ENCODE measurements at regions of chr14 and their contacts with region 1.

Region 1: GRCh38 chr14:60091550-60092530 is at the start of gene PCNX4:
- DNase-seq: peak; percentile 96
- ATAC-seq: peak; percentile 96
- H3K4me3 Mint-ChIP-seq: peak within 1 kb of the TSS; percentile 91
- H3K27ac Mint-ChIP-seq: peak within 1 kb of the TSS; percentile 92
- H3K4me1 Mint-ChIP-seq: peaks cover 34% of the 10 kb centered on the region
- H3K27me3 Mint-ChIP-seq: no peaks in the 10 kb centered on the region
- total RNA-seq, gene PCNX4: 27.0 to 27.6 TPM

Region 2: DNA sequence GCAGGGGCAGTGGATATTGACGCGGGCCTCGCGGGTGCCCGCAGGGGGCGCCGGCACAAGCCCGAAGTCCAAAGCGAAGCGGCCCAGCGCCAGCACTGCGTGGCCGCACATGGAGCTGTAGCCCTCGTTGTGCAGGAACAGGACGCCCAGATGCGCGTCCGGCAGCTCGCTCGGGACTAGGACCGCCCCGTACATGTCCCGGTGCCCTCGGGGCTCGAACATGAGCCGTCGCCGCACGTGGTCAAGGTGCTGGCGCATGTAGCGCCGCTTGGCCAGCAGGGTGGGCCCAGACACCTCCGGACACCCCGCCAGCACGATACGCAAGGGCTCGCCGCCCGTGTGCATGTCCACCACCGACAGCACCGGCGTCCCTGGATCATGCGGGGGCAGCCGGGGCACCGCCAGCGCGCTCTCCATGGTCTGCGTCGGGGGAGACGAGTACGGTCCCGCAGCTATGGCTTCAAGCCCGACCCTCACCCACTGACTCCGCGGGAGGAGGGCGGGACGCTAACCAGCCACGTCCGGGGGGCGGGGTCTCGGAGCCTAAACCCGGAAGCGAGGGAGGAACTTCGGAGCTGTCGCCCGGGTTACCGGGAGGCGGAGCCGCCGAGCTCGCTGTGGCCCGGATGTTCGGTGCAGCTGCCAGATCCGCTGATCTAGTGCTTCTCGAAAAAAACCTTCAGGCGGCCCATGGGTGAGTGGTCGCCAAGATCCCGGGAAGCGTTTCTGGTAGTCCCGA is 607.8 kb before region 1 on chr14 and contains the starts of genes JKAMP and L3HYPDH:
- CTCF ChIA-PET with region 1: interaction called, 3 read pairs
- POLR2A ChIA-PET with region 1: no interaction called
- intact Hi-C with region 1: loop called (anchors 2 to 5 kb)
- DNase-seq: peak; percentile 99
- ATAC-seq: peak; percentile 97
- H3K4me3 Mint-ChIP-seq: peak within 1 kb of the TSS; percentile 92
- H3K27ac Mint-ChIP-seq: peak within 1 kb of the TSS; percentile 89
- H3K4me1 Mint-ChIP-seq: peaks cover 57% of the 10 kb centered on the region
- H3K27me3 Mint-ChIP-seq: no peaks in the 10 kb centered on the region
- total RNA-seq, gene JKAMP: 18.0 to 20.2 TPM
- total RNA-seq, gene L3HYPDH: 9.3 to 11.8 TPM

Region 3: DNA sequence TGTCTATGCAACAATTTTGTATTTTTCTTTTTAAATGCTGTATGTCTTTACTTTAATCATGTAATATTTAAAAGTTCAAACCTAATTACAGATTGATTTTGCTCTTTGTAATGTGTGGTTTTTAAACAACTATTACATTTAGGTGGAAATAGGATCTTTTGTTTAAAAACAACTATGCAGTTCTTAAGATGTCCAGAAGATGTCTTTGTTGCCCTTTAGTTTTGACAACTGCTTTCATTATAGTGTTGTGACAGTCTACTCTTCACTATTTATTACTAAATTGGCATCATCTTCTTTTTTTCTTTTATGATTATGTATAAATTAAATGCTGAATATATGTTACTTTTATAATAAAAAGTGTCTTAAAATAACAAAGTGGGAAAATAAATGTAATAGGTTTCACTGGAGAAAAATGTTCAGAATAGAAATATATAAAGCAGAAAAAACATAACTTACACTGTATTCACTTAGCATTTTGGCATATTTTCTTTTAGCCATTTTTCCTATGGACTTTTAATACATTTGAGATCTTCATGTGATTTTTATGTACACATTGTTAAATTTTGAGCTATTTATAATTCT is 27.3 kb before region 1 on chr14:
- CTCF ChIA-PET with region 1: interaction called, 3 read pairs
- POLR2A ChIA-PET with region 1: no interaction called
- intact Hi-C with region 1: loop called in 1 of 2 experiments (anchors 2 kb)
- DNase-seq: no peak
- ATAC-seq: no peak
- H3K4me3 Mint-ChIP-seq: no peak overlapping the region
- H3K27ac Mint-ChIP-seq: no peak overlapping the region
- H3K4me1 Mint-ChIP-seq: no peaks in the 10 kb centered on the region
- H3K27me3 Mint-ChIP-seq: peaks cover 3% of the 10 kb centered on the region

Region 4: GRCh38 chr14:60164712-60165546 is 73.1 kb after region 1 on chr14 and contains the start of gene DHRS7:
- CTCF ChIA-PET with region 1: interaction called, 4 read pairs
- POLR2A ChIA-PET with region 1: interaction called, 4 read pairs
- intact Hi-C with region 1: loop called (anchors 1 kb)
- DNase-seq: peak; percentile 79
- ATAC-seq: peak; percentile 88
- H3K4me3 Mint-ChIP-seq: peak within 1 kb of the TSS; percentile 99
- H3K27ac Mint-ChIP-seq: peak within 1 kb of the TSS; percentile 99
- H3K4me1 Mint-ChIP-seq: peaks cover 41% of the 10 kb centered on the region
- H3K27me3 Mint-ChIP-seq: no peaks in the 10 kb centered on the region
- total RNA-seq, gene DHRS7: 27.9 to 46.3 TPM

Region 5: GRCh38 chr14:61761959-61762786 is 1670.3 kb after region 1 on chr14 and contains the start of gene SNAPC1:
- CTCF ChIA-PET with region 1: no interaction called
- POLR2A ChIA-PET with region 1: no interaction called
- intact Hi-C with region 1: loop called in 1 of 2 experiments (anchors 5 kb)
- DNase-seq: peak; percentile 98
- ATAC-seq: peak; percentile 98
- H3K4me3 Mint-ChIP-seq: peak within 1 kb of the TSS; percentile 95
- H3K27ac Mint-ChIP-seq: peak within 1 kb of the TSS; percentile 96
- H3K4me1 Mint-ChIP-seq: peaks cover 35% of the 10 kb centered on the region
- H3K27me3 Mint-ChIP-seq: no peaks in the 10 kb centered on the region
- total RNA-seq, gene SNAPC1: 10.5 to 11.2 TPM